ENCODE measurements at regions of chr11 and their contacts with region 1.

Region 1: GRCh38 chr11:86230921-86231430 is 13.6 kb upstream of the EED start:
- DNase-seq: no peak
- ATAC-seq: peak; percentile 18; the same call in 1 of the 3 replicates
- H3K4me3 ChIP-seq: no peak overlapping the region
- H3K27ac ChIP-seq: no peak overlapping the region
- H3K4me1 ChIP-seq: 0 out of 2 replicates have a peak, but pooled peaks cover 5% of the 10 kb centered on the region
- H3K27me3 ChIP-seq: no peaks in the 10 kb centered on the region
- CTCF ChIP-seq: no peak
- EP300 ChIP-seq: no peak
- POLR2A ChIP-seq: no peak
- RAD21 ChIP-seq: no peak

Region 2: GRCh38 chr11:86251345-86251744 is 20.4 kb after region 1 on chr11:
- CTCF ChIA-PET with region 1: interaction called, 4 read pairs
- POLR2A ChIA-PET with region 1: interaction called, 7 read pairs
- RAD21 ChIA-PET with region 1: no interaction called
- SMC1A ChIA-PET with region 1: interaction called, 17 read pairs
- in situ Hi-C with region 1: no loop called
- intact Hi-C with region 1: no loop called
- DNase-seq: no peak
- ATAC-seq: peak; percentile 27
- H3K4me3 ChIP-seq: peak overlapping the region; percentile 15; the same call in 1 of the 2 replicates
- H3K27ac ChIP-seq: peak overlapping the region; percentile 58
- H3K4me1 ChIP-seq: peaks cover 26% of the 10 kb centered on the region
- H3K27me3 ChIP-seq: no peaks in the 10 kb centered on the region
- CTCF ChIP-seq: no peak
- EP300 ChIP-seq: no peak
- POLR2A ChIP-seq: no peak
- RAD21 ChIP-seq: no peak

Measured in GM12878 (cell line).